ENCODE measurements at regions of chr11 and their contacts with region 1.

Region 1: DNA sequence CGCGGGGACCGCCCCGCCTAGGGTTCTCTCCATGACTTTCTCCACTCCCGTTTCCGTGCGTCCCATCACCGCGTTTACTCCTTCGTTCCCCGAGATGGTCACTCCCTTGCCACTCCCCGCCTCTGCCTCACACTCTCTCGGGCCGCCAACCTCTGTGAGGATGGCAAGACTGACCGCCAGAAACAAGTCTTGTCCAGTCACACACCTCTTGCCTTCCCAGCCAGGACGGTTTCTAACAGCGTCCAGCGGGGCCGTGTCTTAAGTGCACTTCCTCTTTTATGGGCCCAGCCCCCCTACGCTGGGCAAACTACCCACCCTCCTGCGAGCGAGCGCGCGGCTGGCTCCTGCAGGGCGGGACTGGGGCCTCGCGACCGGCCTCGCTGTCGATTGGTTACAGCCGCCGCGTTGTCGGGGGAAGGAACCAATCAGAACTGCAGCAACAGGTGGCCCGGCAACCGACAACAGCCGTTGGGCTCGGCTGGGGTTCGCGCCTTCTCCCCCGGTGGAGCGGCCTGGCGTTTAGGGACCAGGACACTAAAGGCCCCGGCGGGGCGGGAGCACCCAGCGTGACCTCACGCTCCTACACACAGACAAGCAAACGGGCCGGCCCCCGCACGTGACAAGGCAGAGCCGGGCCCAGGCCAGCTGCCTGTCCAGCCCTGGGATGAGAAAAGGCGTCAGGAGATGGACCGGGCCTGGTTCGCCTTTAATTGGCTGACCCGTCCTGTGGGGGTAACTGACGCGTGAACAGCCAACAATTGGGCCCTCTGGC is 512 bp upstream of the UCP2 start:
- DNase-seq: peak; percentile 86
- ATAC-seq: peak; percentile 68
- H3K4me3 Mint-ChIP-seq: peak overlapping the region; percentile 99
- H3K27ac Mint-ChIP-seq: peak overlapping the region; percentile 100
- H3K4me1 Mint-ChIP-seq: peaks cover 65% of the 10 kb centered on the region
- H3K27me3 Mint-ChIP-seq: no peaks in the 10 kb centered on the region
- CTCF ChIP-seq: no peak

Region 2: GRCh38 chr11:72080256-72080974 is 1902.7 kb before region 1 on chr11 and contains the starts of genes LRRC51 and NUMA1:
- CTCF ChIA-PET with region 1: no interaction called
- POLR2A ChIA-PET with region 1: no interaction called
- intact Hi-C with region 1: loop called (anchors 5 kb)
- DNase-seq: peak; percentile 94
- ATAC-seq: peak; percentile 90
- H3K4me3 Mint-ChIP-seq: peak within 1 kb of the TSS; percentile 95
- H3K27ac Mint-ChIP-seq: peak within 1 kb of the TSS; percentile 91
- H3K4me1 Mint-ChIP-seq: peaks cover 35% of the 10 kb centered on the region
- H3K27me3 Mint-ChIP-seq: no peaks in the 10 kb centered on the region
- CTCF ChIP-seq: no peak
- total RNA-seq, gene LRRC51: 4.1 and 4.5 TPM in 2 replicates
- total RNA-seq, gene NUMA1: 146 and 163 TPM in 2 replicates

Region 3: DNA sequence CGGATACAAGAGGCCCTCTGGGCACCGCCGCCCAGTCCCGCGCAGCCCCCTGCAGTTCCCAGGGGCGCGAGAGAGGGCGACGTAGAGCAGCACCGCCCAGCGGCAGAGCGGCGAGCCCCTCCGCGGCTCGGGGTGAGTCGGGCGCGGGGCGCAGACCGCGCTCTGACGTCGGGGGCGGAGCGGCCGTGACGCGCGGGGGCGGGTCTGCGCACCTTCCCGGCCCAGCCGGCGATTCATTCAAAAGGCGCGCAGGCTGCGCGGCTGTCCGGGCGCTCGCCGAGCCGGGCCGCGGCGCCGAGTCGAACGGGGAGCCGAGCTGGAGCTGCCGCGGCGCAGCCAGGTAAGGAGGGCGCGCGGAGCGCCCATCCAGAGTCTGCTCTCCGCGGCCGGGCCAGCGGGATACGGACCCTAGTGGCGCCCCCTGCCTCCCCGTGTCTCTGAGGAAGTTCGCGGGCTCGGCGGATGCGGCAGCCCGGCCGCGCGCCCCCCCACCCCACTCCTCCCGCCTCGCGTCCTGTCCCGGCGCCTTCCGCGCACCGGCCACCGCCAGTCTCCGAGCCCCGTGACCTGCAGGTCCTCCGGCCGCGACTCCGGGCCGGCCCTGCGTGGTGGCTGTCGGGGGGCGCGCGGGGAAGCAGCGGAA is 606.9 kb before region 1 on chr11 and contains the start of gene RELT:
- CTCF ChIA-PET with region 1: no interaction called
- POLR2A ChIA-PET with region 1: no interaction called
- intact Hi-C with region 1: loop called (anchors 5 kb)
- DNase-seq: peak; percentile 99
- ATAC-seq: peak; percentile 89
- H3K4me3 Mint-ChIP-seq: peak within 1 kb of the TSS; percentile 89
- H3K27ac Mint-ChIP-seq: peak within 1 kb of the TSS; percentile 89
- H3K4me1 Mint-ChIP-seq: peaks cover 73% of the 10 kb centered on the region
- H3K27me3 Mint-ChIP-seq: no peaks in the 10 kb centered on the region
- CTCF ChIP-seq: peak; percentile 63
- total RNA-seq, gene RELT: 81.8 and 90.1 TPM in 2 replicates

Region 4: DNA sequence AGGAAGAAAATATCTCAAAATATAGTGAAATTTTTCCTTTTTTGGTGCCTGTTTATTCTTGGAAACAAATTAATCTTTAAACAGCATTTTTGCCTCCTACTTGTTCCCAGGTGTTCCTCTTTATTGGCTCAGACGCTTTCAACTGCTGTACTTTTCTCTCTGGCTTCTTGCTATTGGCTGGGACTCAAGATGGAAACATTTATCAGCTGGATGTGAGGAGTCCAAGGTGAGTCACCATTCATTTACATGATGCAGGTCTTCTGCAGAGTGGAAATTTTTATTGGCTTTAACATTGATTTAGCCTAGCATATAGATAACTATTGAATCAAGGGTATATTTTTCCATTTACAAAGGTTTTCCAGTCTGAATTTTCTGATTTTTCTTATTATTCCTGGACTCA is 66.7 kb before region 1 on chr11:
- CTCF ChIA-PET with region 1: no interaction called
- POLR2A ChIA-PET with region 1: no interaction called
- intact Hi-C with region 1: no loop called
- DNase-seq: no peak
- ATAC-seq: no peak
- H3K4me3 Mint-ChIP-seq: no peak overlapping the region
- H3K27ac Mint-ChIP-seq: no peak overlapping the region
- H3K4me1 Mint-ChIP-seq: no peaks in the 10 kb centered on the region
- H3K27me3 Mint-ChIP-seq: no peaks in the 10 kb centered on the region
- CTCF ChIP-seq: no peak

Region 5: GRCh38 chr11:73971175-73971719 is 11.9 kb before region 1 on chr11:
- CTCF ChIA-PET with region 1: interaction called, 7 read pairs
- POLR2A ChIA-PET with region 1: interaction called, 425 read pairs
- intact Hi-C with region 1: loop called (anchors 1 kb)
- DNase-seq: no peak
- ATAC-seq: peak; percentile 29
- H3K4me3 Mint-ChIP-seq: peak overlapping the region; percentile 38
- H3K27ac Mint-ChIP-seq: peak overlapping the region; percentile 100
- H3K4me1 Mint-ChIP-seq: peaks cover 88% of the 10 kb centered on the region
- H3K27me3 Mint-ChIP-seq: no peaks in the 10 kb centered on the region
- CTCF ChIP-seq: no peak

Region 6: DNA sequence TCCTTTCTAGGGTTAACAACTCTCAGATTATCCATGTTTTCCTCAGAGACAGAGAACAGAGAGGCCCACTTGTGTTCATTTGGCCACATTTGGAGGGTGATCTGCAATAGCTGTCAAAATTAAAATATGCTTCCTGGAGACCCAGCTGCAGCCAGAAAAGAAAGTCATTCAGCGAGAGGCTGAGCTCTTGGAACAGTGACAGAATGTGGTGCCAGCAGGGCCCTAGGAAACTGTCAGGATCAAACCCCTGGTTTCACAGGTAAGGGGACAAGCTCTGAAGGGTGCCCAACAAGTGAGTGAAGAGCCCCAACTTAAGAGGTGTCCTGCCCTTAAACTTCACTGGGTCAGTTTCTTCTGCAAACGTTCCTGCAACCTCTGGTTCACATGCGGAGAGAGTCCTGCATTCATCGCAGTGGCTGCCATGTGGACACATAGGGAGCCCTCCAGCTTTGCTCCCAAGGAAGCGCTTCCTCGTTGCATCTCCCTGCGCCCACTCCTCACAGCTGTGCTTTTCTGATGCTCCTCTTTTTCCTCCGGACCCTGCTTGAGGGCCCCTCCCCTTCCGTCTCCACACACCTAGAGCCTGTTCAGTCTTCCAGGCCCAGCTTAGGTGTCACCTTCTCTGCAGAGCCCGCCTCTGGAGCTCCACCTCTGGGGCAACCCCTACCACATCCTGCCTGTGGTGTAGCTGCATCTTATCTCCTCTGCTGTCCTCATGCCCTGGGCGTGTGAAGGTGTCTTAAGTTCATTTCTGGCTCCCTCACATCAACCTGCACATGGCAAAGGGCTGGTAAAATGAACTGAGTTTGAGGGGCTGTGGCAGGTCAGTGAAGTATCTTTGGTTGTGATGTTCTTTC is 21.8 kb after region 1 on chr11:
- CTCF ChIA-PET with region 1: interaction called, 7 read pairs
- POLR2A ChIA-PET with region 1: interaction called, 425 read pairs
- intact Hi-C with region 1: no loop called
- DNase-seq: no peak
- ATAC-seq: peak; percentile 98
- H3K4me3 Mint-ChIP-seq: peak overlapping the region; percentile 8
- H3K27ac Mint-ChIP-seq: peak overlapping the region; percentile 75
- H3K4me1 Mint-ChIP-seq: peaks cover 39% of the 10 kb centered on the region
- H3K27me3 Mint-ChIP-seq: no peaks in the 10 kb centered on the region
- CTCF ChIP-seq: no peak

Region 7: DNA sequence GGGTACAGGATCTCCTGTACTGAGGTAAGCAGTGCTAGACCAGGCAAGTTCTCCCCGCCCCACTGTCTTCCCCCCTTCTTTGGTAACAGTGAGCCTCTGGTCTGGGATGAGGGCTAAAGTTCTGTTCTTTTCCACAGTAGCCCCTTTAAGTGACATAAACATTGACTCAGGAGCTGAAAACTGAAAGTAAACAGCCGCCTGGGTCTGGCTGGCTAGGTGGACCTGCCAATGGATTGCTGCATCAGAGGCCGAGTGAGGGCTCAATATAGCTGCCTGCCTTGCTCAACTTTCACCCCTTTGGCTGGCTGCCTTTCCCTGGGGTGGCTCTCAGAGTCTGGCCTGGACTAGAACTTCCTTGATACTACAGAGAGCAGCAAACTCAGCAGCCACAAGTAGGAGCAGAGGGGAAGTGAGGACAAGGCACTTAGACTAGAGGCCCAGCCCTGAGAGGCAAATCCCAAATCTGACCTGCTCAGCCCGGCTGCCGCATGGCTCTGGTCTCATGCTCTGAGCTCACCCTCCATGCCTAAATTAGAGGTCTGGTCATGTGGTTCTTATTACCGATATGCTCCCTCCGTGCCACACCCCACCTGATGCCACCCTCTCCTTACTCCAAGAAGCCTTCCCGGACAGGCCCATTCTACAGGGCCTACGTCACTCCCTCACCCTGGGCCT is 35.3 kb after region 1 on chr11:
- CTCF ChIA-PET with region 1: no interaction called
- POLR2A ChIA-PET with region 1: interaction called, 67 read pairs
- intact Hi-C with region 1: loop called (anchors 2 kb)
- DNase-seq: no peak
- ATAC-seq: no peak
- H3K4me3 Mint-ChIP-seq: no peak overlapping the region
- H3K27ac Mint-ChIP-seq: peak overlapping the region; percentile 36
- H3K4me1 Mint-ChIP-seq: peaks cover 33% of the 10 kb centered on the region
- H3K27me3 Mint-ChIP-seq: no peaks in the 10 kb centered on the region
- CTCF ChIP-seq: no peak

Region 8: DNA sequence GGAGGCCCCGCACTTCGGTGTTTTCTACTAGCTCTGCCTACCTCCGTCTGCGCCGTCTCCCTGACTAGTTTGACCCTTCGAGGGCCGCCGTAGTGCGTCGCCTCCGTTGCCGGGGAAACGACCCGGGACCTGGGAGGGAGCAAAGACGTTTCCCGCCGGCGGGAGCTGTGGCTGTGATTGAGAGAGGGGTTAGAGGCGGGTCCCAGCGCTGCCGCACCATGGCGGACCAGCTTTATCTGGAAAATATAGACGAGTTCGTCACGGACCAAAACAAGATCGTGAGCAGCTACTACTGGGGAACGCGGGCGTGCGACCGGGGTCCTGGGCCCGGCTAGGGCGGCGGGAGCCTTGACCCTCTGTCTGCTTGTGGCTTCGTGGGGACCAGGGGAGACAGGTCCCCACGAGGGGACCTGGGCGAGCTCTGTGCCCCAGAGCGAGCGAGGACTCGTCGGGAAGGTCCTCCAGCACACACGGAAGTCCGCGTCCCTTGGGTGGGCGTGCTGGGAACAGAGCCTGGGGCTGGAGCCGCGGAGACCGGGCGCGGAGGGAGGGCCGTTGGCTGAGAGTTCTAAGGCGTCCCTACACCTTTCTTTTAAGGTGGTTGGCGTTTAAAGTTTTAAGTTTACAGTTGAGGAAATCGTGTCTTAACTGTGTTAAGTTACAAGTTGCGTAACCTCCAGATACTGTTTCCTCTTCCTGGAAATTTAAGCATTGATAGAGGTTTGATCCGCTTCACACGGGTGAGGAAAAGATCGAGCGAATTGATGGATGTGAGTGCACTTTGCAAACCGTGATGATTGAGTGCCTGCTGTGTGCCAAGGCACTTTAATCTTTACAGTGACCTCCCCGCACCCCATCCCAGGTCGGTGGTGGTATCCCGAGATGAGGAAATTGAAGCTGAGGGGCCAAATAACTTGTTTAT is 609.5 kb after region 1 on chr11 and contains the start of gene POLD3:
- CTCF ChIA-PET with region 1: no interaction called
- POLR2A ChIA-PET with region 1: no interaction called
- intact Hi-C with region 1: loop called (anchors 5 kb)
- DNase-seq: peak; percentile 83
- ATAC-seq: peak; percentile 99
- H3K4me3 Mint-ChIP-seq: peak within 1 kb of the TSS; percentile 94
- H3K27ac Mint-ChIP-seq: peak within 1 kb of the TSS; percentile 86
- H3K4me1 Mint-ChIP-seq: peaks cover 17% of the 10 kb centered on the region
- H3K27me3 Mint-ChIP-seq: no peaks in the 10 kb centered on the region
- CTCF ChIP-seq: no peak
- total RNA-seq, gene POLD3: 14.9 and 16.3 TPM in 2 replicates

Measured in activated B cell treated with CpG ODN at 0.5 μM for 24 hours (primary cell).